Dorsolateral prefrontal cortex (tissue), 120 donors: ENCODE measurements at regions of chrX and their contacts with region 1.

Region 1: DNA sequence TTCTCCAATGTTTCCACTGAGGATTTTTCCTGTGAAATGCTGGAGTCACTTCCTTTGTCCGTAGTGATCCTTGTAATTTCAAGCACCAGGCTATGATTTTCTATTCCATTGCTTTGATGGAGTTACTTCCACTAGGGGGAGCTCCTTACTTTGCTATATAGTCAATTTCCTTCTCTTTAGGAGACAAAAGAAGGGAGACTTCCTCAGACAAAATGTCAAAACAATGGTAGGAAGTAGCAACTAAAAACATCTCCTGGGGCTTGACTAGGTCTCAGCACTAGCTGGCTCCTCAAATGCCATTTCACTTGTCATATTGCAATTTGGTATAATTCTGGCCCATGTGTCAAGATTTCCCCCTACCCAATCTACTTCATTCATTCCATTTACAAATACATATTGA is 24.1 kb downstream of the ZCCHC12 start:
- DNase-seq: no peak
- H3K4me3 ChIP-seq: no peak overlapping the region
- H3K27ac ChIP-seq: no peak overlapping the region
- H3K27me3 ChIP-seq: peaks cover 0 to 32% (median 3%) of the 10 kb centered on the region in 45 donors
- CTCF ChIP-seq: peak; percentile 38 to 89 (median 76)

Region 2: DNA sequence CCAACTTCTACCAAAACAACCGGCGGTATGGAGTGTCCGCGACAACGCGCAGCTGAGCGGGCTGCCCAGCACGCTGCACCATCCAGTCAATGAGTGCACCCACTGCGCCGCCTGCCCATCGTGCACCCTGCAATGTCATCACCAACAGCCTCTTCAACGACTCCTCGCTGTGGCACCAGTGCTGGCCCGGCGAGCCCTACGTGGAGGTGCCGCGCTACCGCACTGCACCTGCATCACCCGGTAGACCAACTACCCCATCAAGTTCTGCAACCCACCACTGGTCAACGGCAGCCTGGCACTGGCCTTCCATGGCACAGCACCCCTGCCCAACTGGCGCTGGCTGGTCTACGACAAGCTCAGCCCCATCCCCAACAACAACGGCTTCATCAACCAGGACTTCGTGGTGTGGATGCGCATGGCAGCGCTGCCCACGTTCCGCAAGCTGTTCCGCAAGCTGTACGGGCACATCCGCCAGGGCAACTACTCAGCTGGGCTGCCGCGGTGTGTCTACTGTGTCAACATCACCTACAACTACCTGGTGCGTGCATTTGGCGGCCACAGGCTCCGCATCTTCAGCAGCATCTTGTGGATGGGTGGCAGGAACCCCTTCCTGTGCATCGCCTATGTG is 77.4 kb before region 1 on chrX:
- intact Hi-C with region 1: no loop called
- DNase-seq: no peak
- H3K4me3 ChIP-seq: no peak overlapping the region
- H3K27ac ChIP-seq: no peak overlapping the region
- H3K27me3 ChIP-seq: peaks cover 0 to 87% (median 23%) of the 10 kb centered on the region in 45 donors
- CTCF ChIP-seq: no peak

Region 3: DNA sequence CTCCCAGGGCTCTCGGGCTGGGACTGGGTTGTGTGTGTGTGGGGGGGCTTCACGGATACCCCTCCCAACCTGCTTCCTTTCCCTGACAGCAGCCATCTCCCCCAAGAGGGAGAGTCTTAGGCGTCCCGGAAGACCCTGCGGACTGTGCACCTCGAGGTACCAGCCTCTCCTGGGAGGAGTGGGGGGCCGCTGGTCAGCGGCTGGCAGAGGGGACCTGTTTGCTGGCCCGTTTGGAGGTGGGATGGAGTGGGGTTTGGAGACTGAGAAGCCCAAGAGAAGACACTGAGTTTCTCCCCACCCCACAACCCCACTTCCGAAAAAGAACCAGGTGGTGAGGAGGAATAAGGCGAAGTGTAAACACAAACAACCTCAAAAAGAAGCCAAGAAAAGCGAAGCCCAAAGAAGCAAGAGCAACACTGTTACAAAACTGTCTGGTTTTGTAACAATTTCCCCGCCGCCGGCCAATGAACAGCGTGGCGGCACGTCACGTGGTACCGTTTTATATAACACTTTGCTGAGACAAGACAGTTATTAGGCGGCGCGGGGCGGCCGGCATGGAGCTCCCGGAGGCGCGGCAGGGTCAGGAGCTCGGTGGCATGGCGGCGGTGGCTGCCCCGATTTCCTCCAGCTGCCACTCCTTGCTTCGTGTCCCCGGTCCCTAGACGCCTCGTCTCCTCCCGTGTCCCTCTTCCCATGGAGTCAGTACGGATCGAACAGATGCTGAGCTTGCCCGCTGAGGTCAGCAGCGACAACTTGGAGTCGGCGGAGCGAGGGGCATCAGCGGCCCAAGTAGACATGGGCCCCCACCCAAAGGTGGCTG is 126.6 kb after region 1 on chrX and contains the start of gene LONRF3:
- intact Hi-C with region 1: loop called (anchors 10 kb)
- DNase-seq: peak; percentile 54 to 79 (median 69)
- H3K4me3 ChIP-seq: peak within 1 kb of the TSS; percentile 25 to 73 (median 58)
- H3K27ac ChIP-seq: peak within 1 kb of the TSS in 20 of 59 donors; percentile 10 to 74 (median 37)
- H3K27me3 ChIP-seq: peaks cover 0 to 71% (median 16%) of the 10 kb centered on the region in 45 donors
- CTCF ChIP-seq: peak in 1 of 56 donors; percentile 16
- total RNA-seq, gene LONRF3: 2.8 to 18.1 (median 6.8) TPM

Region 4: GRCh38 chrX:119004920-119005524 is 157.3 kb after region 1 on chrX:
- intact Hi-C with region 1: loop called (anchors 5 kb)
- DNase-seq: peak in 7 of 10 donors; percentile 43 to 75 (median 46)
- H3K4me3 ChIP-seq: no peak overlapping the region
- H3K27ac ChIP-seq: no peak overlapping the region
- H3K27me3 ChIP-seq: peaks cover 0 to 71% (median 7%) of the 10 kb centered on the region in 45 donors
- CTCF ChIP-seq: peak in 55 of 56 donors; percentile 18 to 86 (median 74)

Region 5: DNA sequence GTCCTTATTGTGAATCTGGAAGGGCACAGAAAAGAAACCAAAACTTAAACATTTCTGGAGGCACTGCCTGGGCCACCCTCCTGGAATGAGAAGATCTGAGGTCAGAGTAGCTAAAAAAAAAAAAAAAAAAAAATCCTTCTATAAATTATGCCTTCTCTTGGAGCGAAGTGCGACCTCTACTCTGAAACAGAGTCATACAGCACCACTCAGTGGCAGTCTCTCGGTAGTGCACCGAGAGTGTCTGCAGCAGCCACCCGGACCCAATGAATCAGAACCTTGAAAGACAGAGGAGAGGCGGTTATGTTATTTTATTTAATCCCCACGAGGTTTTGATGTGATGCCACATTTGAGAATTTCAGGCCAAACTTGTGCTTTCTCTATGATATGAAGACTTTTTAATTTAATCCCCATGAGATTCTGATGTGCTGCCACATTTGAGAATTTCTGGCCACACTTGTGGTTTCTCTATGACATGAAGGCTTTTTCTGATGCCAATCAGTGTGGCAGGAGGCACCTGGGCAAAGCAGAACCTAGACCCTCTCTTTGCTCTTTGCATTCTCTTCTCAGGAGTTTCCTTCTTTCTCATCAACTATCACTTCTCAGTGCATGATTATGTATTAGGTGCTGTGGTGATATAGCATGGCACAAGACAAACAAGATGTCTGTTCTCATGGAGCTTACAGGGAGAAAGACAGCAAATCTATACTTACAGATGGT is 219.5 kb after region 1 on chrX:
- intact Hi-C with region 1: loop called (anchors 2 to 5 kb)
- DNase-seq: peak; percentile 27 to 62 (median 52)
- H3K4me3 ChIP-seq: no peak overlapping the region
- H3K27ac ChIP-seq: no peak overlapping the region
- H3K27me3 ChIP-seq: peaks cover 0 to 57% (median 30%) of the 10 kb centered on the region in 45 donors
- CTCF ChIP-seq: peak in 55 of 56 donors; percentile 33 to 76 (median 63)